Gastrocnemius medialis (tissue), 4 donors: ENCODE measurements at regions of chr1 and their contacts with region 1.

Region 1: GRCh38 chr1:109298666-109299557 is 7.9 kb downstream of the MYBPHL start:
- DNase-seq: peak in 1 of 2 donors; percentile 43
- ATAC-seq: peak; percentile 40 to 43
- H3K4me3 ChIP-seq: no peak overlapping the region
- H3K27ac ChIP-seq: peak overlapping the region; percentile 15 to 72 (median 42)
- H3K4me1 ChIP-seq: peaks cover 15 to 18% of the 10 kb centered on the region in 2 donors
- H3K27me3 ChIP-seq: peaks cover 0 to 9% (median 0%) of the 10 kb centered on the region in 3 donors
- CTCF ChIP-seq: no peak
- POLR2A ChIP-seq: no peak

Region 2: DNA sequence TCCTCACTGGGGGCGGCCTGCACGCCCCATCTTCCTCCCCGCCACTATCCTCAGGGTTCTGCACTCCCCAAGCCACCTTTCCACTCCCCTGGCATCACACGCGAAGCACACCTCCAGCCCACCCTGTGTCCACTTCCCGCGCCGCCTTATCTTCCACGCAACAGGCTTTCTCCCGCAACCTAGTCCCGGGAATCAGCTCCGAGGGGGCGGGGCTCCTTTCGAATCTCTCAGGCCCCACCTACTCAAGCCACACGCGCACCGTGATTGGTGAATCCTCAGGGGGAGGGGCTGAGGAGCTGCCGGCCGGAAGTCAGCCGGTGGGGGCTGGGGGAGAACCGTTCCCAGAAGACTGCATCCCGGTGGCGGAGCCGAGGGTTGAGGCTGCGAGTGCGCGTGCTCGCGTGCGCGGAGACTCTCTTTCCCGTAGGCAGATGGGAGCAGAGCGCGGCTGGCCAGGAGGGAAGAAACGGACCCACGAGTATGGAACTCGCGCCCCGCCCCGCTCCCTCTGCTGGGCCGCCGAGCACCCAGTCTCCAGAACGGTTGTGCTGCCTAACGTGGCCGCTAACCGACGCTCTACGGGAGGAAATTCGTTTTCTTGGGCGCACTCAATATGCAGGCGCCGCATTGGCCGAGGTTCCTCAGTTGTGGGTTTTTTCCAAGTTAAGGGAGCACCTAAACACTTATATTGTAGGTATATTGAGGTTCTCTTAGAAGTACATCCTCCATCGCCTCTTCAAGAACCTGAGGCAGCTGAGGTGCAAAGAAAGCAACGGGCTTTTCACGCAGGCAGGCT is 15.8 kb before region 1 on chr1 and contains the start of gene PSRC1:
- in situ Hi-C with region 1: no loop called
- intact Hi-C with region 1: loop called (anchors 2 kb)
- DNase-seq: peak; percentile 95 to 96
- ATAC-seq: peak; percentile 94 to 98
- H3K4me3 ChIP-seq: peak within 1 kb of the TSS; percentile 64 to 72 (median 64)
- H3K27ac ChIP-seq: peak within 1 kb of the TSS; percentile 79 to 93 (median 86)
- H3K4me1 ChIP-seq: peaks cover 13 to 19% of the 10 kb centered on the region in 2 donors
- H3K27me3 ChIP-seq: no peaks in the 10 kb centered on the region
- CTCF ChIP-seq: peak in 4 of 5 experiments; percentile 43 to 71 (median 59)
- POLR2A ChIP-seq: peak; percentile 66 to 68
- total RNA-seq, gene PSRC1: 0.19 to 2.3 (median 0.84) TPM in 3 of 4 donors, not detected in the other

Region 3: GRCh38 chr1:109350655-109351054 is 51.7 kb after region 1 on chr1:
- in situ Hi-C with region 1: no loop called
- intact Hi-C with region 1: loop called (anchors 5 kb)
- DNase-seq: no peak
- ATAC-seq: no peak
- H3K4me3 ChIP-seq: no peak overlapping the region
- H3K27ac ChIP-seq: no peak overlapping the region
- H3K4me1 ChIP-seq: no peaks in the 10 kb centered on the region
- H3K27me3 ChIP-seq: no peaks in the 10 kb centered on the region
- CTCF ChIP-seq: no peak
- POLR2A ChIP-seq: no peak